ENCODE measurements at regions of chr13 and their contacts with region 1.

Region 1: DNA sequence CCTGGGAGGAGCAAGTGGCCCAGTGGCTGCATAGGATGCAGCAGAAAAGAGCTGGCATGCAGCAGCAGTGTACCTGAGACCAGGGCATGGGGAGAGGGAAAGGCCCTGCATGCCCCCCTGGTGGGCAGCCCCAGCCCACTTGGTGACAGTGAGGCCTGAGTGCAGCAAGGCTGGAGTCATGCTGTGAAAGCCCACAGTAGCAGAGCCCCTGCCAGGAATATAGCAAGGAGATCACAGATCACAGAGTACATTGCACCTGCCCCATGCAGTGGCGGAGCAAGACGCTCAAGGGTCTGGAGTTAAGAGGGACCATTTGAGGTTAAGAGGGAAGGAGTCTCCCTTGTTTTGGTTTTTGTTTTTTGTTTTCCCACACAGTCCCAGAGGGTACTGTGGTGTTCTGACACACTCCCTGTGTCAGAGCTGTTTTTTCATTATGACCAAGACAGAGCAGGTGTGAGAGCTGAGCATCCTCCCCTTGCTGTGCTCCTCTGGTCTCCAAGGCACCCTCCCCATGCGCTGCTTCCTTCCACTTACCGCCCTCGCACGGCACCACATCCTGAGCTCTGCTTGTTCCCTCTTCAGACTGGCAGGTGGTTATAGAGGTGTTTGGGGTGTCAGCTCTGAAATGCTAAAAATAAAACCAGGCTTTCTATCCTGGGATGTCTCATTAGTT is 85.0 kb upstream of the UBL3 start:
- DNase-seq: peak; percentile 71
- ATAC-seq: peak; percentile 97
- H3K4me3 Mint-ChIP-seq: peak overlapping the region; percentile 87
- H3K27ac Mint-ChIP-seq: peak overlapping the region; percentile 93
- H3K4me1 Mint-ChIP-seq: peaks cover 36% of the 10 kb centered on the region
- H3K27me3 Mint-ChIP-seq: no peaks in the 10 kb centered on the region

Region 2: GRCh38 chr13:29850224-29850898 is 85.1 kb before region 1 on chr13 and contains the start of gene UBL3:
- POLR2A ChIA-PET with region 1: interaction called, 23 read pairs
- DNase-seq: peak; percentile 91
- ATAC-seq: peak; percentile 92
- H3K4me3 Mint-ChIP-seq: peak within 1 kb of the TSS; percentile 89
- H3K27ac Mint-ChIP-seq: peak within 1 kb of the TSS; percentile 100
- H3K4me1 Mint-ChIP-seq: peaks cover 28% of the 10 kb centered on the region
- H3K27me3 Mint-ChIP-seq: no peaks in the 10 kb centered on the region
- total RNA-seq, gene UBL3: 20.5 to 23.6 TPM

Region 3: DNA sequence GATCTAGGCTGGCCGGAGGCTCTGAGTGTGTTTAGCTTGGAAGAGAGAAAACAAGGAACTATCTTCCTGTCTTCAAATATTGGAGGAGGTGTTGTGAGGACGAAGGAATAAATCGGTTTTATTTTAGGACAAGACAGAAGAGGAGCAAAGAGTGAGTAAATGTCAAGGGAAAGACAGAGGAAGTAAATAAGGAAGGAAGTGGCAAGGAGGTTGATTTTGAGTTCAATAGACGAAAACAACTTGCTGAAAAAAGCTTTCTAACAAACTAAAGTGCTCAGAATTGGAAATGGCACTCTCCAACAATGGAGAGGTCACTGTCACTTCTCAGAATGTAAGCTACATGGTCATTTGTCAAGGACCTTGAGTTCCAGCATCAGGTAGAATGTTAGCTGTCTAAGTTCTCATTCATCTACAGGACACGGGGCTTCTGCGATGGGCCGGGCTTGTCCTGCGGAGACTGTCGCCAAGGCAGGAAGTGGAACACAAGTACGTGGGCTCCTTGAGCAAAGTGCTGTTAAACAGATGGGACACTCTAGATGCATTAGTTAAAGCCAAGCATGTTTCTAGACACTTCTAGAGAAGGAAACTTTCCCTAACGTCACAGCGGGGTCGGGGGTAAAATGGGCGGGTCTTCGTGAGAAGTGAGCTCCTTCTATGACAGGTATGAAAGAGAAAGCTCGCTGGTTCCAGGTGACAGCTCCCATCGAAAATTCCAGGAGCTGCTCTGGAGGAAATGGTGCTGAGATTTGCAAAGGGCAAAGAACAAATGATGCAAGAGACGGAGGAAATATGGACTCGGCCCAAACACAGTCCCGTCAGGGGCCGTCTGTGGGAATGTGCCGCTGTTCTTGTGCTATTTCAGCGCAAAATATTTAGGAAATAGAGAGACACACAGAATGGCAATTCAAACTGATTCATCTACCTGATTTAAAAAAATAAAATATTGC is 18.9 kb after region 1 on chr13:
- POLR2A ChIA-PET with region 1: interaction called, 30 read pairs
- DNase-seq: peak; percentile 50
- ATAC-seq: peak; percentile 96
- H3K4me3 Mint-ChIP-seq: peak overlapping the region; percentile 76
- H3K27ac Mint-ChIP-seq: peak overlapping the region; percentile 91
- H3K4me1 Mint-ChIP-seq: peaks cover 29% of the 10 kb centered on the region
- H3K27me3 Mint-ChIP-seq: peaks cover 2% of the 10 kb centered on the region

Measured in activated naive CD8-positive, alpha-beta T cell treated with anti-CD3 and anti-CD28 coated beads, Interleukin-2, amount 10 ng/mL, durations not matched to agents 7 days and 5 days (primary cell).